ENCODE measurements at regions of chr6 and their contacts with region 1.

Region 1: GRCh38 chr6:33585403-33586107 is 5.5 kb upstream of the BAK1 start:
- DNase-seq: peak; percentile 97
- H3K4me3 ChIP-seq: peak overlapping the region in 2 of 4 donors; percentile 22 to 41
- H3K27ac ChIP-seq: no peak overlapping the region
- H3K4me1 ChIP-seq: peaks cover 24 to 35% (median 28%) of the 10 kb centered on the region in 4 donors
- H3K27me3 ChIP-seq: no peaks in the 10 kb centered on the region
- CTCF ChIP-seq: peak; percentile 92 to 99 (median 95)
- EP300 ChIP-seq: no peak
- POLR2A ChIP-seq: no peak

Region 2: GRCh38 chr6:32462609-32463008 is 1122.9 kb before region 1 on chr6:
- intact Hi-C with region 1: no loop called
- DNase-seq: no peak
- H3K4me3 ChIP-seq: no peak overlapping the region
- H3K27ac ChIP-seq: no peak overlapping the region
- H3K4me1 ChIP-seq: no peaks in the 10 kb centered on the region
- H3K27me3 ChIP-seq: peaks cover 0 to 19% (median 0%) of the 10 kb centered on the region in 4 donors
- CTCF ChIP-seq: no peak
- EP300 ChIP-seq: no peak
- POLR2A ChIP-seq: no peak

Region 3: DNA sequence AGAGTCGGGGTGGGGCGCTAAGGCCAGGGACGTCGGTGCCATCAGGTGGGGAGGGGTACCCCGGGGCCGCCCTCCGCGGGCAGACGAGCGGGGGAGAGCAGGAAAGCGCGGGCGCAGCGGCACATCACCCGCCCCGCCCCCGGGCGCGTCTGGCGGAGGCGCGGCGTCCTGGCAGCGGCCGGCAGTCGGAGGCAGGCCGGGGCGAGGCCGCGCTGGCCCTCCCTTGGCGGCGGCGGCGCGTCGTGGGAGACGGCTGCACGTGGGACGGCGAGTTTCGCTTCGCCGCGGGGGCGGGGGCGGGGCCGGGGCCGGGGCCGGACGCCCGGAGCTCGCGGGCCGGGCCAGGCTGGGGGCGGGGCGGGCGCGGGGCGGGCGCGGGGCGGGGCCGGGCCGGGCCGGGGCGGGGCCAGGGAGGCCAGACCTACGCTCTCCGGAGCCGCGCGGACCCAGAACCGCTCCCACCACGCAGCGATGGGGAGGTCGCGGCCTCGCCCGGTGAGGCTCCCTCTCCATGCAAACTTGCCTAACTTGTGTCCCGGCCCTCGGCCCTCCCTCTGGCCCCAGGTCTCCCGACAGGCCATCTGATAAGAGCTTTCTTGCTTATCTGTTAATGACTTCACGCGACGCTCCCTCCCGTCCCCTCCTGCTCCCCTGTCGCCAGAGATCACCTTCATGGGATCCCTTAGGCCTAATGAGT is 48.1 kb after region 1 on chr6:
- intact Hi-C with region 1: loop called (anchors 5 kb)
- DNase-seq: no peak
- H3K4me3 ChIP-seq: peak overlapping the region; percentile 48 to 61 (median 50)
- H3K27ac ChIP-seq: peak overlapping the region; percentile 21 to 53 (median 42)
- H3K4me1 ChIP-seq: peaks cover 23 to 36% (median 29%) of the 10 kb centered on the region in 4 donors
- H3K27me3 ChIP-seq: peaks cover 0 to 44% (median 0%) of the 10 kb centered on the region in 4 donors
- CTCF ChIP-seq: no peak
- EP300 ChIP-seq: no peak
- POLR2A ChIP-seq: no peak

Region 4: DNA sequence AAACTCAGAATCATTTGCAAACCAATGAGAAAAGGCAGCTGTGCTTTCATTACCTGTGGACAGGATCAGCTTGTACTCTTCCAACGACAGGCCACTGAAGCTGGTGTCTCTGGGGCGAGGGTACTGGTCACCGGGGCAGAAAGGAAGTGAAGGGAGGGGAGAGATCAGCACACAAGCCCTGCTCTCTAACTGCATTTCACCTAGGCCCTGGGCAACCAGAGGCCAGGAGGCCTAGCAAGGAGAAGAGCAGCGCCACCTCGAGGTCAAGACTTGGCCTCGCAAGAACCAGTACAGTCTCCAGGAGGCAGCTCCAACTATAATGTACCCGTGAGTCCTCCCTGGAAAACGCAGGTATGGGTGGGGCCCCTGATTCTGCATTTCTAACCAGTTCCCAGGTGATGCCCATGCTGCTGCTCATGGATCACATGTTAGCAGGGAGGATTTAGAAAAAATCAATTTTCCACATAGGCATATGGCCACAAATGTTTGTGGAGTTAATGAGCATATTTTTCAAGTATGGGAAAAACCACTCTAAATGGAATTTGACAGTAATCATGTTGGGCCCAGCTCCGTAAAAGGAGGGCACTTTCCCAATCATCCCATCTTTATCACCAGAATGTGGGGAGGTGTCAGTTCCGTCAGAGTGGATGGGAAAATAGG is 115.0 kb after region 1 on chr6:
- intact Hi-C with region 1: loop called (anchors 5 kb)
- DNase-seq: no peak
- H3K4me3 ChIP-seq: no peak overlapping the region
- H3K27ac ChIP-seq: no peak overlapping the region
- H3K4me1 ChIP-seq: peaks cover 31 to 40% (median 38%) of the 10 kb centered on the region in 4 donors
- H3K27me3 ChIP-seq: no peaks in the 10 kb centered on the region
- CTCF ChIP-seq: peak; percentile 32 to 50 (median 43)
- EP300 ChIP-seq: no peak
- POLR2A ChIP-seq: no peak

Measured in esophagus muscularis mucosa (tissue), 4 donors.